Mammary epithelial cell (primary cell): ENCODE measurements at regions of chr6 and their contacts with region 1.

Region 1: GRCh38 chr6:136526196-136526930 is 23.9 kb downstream of the MAP7 start:
- DNase-seq: peak; percentile 64
- H3K4me3 ChIP-seq: no peak overlapping the region
- H3K27ac ChIP-seq: no peak overlapping the region
- H3K4me1 ChIP-seq: peaks cover 12% of the 10 kb centered on the region
- H3K27me3 ChIP-seq: no peaks in the 10 kb centered on the region
- CTCF ChIP-seq: peak; percentile 13 to 43

Region 2: DNA sequence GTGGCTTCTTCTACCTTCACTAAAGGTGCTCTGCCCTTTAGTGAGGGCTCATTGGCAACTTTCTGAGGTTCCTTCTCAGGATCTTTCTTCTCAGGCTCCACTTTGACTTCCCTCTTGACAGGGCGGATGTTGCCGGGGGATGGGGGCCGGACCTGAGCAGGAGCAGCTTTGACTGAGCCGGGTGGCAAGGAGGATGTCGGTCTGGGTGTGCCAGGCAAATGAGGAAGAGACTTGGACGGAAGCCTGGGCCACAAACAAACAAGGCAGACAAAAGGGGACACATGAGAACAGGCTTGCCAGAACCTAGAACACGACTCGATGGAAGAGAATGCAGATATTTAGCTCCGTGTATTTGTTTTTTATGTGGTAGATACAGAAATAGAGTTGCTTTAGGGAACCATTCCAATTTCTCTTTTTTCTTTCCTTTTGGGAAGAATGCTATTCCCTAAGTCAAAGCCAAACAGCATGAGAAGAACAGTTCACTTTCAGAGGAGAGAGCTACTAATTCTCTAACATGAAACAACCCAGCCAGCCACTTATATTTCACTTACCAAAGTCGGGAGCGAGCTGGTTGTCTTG is 160.5 kb before region 1 on chr6:
- CTCF ChIA-PET with region 1: no interaction called
- dilution Hi-C with region 1: no loop called
- in situ Hi-C with region 1: loop called in 1 of 2 experiments (anchors 25 kb)
- intact Hi-C with region 1: no loop called
- DNase-seq: no peak
- H3K4me3 ChIP-seq: no peak overlapping the region
- H3K27ac ChIP-seq: no peak overlapping the region
- H3K4me1 ChIP-seq: no peaks in the 10 kb centered on the region
- H3K27me3 ChIP-seq: no peaks in the 10 kb centered on the region
- CTCF ChIP-seq: no peak

Region 3: GRCh38 chr6:136378886-136379285 is 147.5 kb before region 1 on chr6:
- CTCF ChIA-PET with region 1: no interaction called
- dilution Hi-C with region 1: no loop called
- in situ Hi-C with region 1: loop called (anchors 25 kb)
- intact Hi-C with region 1: no loop called
- DNase-seq: no peak
- H3K4me3 ChIP-seq: no peak overlapping the region
- H3K27ac ChIP-seq: no peak overlapping the region
- H3K4me1 ChIP-seq: no peaks in the 10 kb centered on the region
- H3K27me3 ChIP-seq: no peaks in the 10 kb centered on the region
- CTCF ChIP-seq: peak; percentile 12 to 52

Region 4: DNA sequence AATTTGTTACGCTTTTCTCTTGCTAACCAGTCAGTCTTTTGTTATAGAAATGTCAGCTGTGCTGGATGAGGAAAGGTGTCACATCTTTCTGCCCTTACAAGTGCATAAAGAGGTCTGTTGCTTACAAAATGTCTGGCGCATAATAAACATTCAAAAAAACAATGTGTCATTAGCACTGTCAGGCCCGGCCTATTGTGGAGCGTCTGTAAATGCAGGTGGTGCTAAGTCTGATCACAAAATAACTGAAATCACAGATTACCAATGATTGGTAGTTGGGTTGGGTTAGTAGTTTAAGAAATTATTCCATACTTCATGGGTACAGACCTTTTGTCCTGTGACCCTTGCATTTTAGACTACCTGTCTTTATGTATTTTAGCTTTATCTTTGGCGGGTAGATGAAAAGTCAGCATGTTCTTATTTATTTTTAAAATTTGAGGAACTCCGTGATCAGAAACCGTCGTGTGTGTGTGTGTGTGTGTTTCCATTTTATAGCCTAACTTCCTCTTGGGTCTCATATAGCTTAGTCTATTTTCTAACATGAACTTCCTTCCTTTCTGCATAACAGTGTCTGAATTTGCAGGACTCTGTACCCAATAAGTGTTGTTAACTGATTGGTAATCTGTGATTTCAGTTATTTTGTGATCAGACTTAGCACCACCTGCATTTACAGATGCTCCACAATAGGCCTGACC is 780.9 kb after region 1 on chr6:
- CTCF ChIA-PET with region 1: no interaction called
- dilution Hi-C with region 1: no loop called
- in situ Hi-C with region 1: no loop called
- intact Hi-C with region 1: no loop called
- DNase-seq: no peak
- H3K4me3 ChIP-seq: no peak overlapping the region
- H3K27ac ChIP-seq: no peak overlapping the region
- H3K4me1 ChIP-seq: peaks cover 9% of the 10 kb centered on the region
- H3K27me3 ChIP-seq: no peaks in the 10 kb centered on the region
- CTCF ChIP-seq: no peak